PC-3 (cell line): ENCODE measurements at regions of chr11 and their contacts with region 1.

Region 1: GRCh38 chr11:118145285-118146227 is 7.1 kb downstream of the SCN4B start:
- DNase-seq: peak; percentile 95
- ATAC-seq: peak; percentile 96
- H3K4me3 ChIP-seq: peak overlapping the region; percentile 87
- H3K27ac ChIP-seq: no peak overlapping the region
- H3K4me1 ChIP-seq: no peaks in the 10 kb centered on the region
- H3K27me3 ChIP-seq: peaks cover 42% of the 10 kb centered on the region
- CTCF ChIP-seq: peak; percentile 96

Region 2: DNA sequence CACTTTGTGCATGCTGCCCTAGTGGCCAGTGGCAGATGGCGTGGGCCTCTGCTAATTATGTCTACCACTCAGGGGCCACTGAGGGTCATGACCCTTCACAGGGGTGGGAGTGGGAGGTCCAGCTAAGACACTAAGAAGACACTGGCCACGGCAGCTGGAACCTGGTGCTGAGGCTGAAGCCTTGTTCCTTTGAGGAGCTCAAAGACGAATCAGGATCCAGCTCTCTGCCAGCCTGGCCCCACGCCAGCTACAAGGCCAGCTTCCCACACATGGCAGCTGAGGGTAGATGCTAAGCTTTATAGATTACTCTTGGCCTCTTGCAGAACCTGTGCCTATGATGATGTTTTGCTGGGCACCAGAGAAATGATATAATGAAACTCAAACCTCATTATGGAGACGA is 574.9 kb before region 1 on chr11:
- CTCF ChIA-PET with region 1: no interaction called
- POLR2A ChIA-PET with region 1: no interaction called
- intact Hi-C with region 1: no loop called
- DNase-seq: no peak
- ATAC-seq: no peak
- H3K4me3 ChIP-seq: no peak overlapping the region
- H3K27ac ChIP-seq: no peak overlapping the region
- H3K4me1 ChIP-seq: no peaks in the 10 kb centered on the region
- H3K27me3 ChIP-seq: peaks cover 51% of the 10 kb centered on the region
- CTCF ChIP-seq: no peak

Region 3: GRCh38 chr11:118027691-118028090 is 117.9 kb before region 1 on chr11:
- CTCF ChIA-PET with region 1: no interaction called
- POLR2A ChIA-PET with region 1: no interaction called
- intact Hi-C with region 1: no loop called
- DNase-seq: no peak
- ATAC-seq: no peak
- H3K4me3 ChIP-seq: no peak overlapping the region
- H3K27ac ChIP-seq: no peak overlapping the region
- H3K4me1 ChIP-seq: no peaks in the 10 kb centered on the region
- H3K27me3 ChIP-seq: peaks cover 76% of the 10 kb centered on the region
- CTCF ChIP-seq: no peak; the same call in 1 of the 2 replicates

Region 4: DNA sequence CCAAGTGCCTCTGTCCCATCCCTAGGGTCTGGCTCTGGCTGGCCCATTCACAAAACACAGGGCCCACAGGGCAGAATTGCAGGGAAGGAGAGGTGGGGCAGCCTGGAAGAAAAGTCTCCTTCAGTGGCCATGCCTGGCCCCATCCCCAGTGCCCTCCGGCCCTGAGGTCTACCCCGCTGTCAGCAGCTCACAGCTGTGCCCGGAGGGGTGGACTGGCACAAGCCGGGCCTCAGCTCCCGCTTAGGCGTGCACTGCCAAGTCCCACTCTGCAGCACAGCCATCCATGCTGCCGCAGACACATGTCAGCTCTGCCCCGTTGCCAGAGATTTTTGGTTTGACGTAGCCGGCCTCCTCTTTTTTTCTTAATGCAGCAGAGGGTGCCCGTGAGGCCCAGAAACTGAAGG is 34.7 kb after region 1 on chr11:
- CTCF ChIA-PET with region 1: no interaction called
- POLR2A ChIA-PET with region 1: no interaction called
- intact Hi-C with region 1: no loop called
- DNase-seq: no peak
- ATAC-seq: no peak
- H3K4me3 ChIP-seq: no peak overlapping the region
- H3K27ac ChIP-seq: no peak overlapping the region
- H3K4me1 ChIP-seq: peaks cover 10% of the 10 kb centered on the region
- H3K27me3 ChIP-seq: no peaks in the 10 kb centered on the region
- CTCF ChIP-seq: no peak

Region 5: DNA sequence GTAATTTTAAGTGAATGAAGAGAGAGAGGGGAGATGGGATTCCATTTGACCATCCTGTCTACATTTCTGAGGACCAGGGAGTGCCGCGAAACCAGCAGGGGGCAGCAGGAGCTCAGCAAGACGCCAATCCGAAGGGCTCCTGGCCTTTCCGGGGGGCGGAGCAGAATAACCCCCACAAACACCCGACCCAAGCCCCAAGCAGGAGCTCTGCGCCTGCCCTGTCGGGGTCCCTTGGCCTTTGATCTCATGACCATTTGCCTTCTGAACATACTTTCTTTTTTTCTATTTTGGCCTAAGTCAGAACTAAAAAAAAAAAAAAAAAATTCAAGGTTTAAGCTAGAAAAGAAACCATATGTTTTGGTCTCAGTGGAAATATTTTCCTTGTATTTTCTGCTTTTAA is 52.8 kb after region 1 on chr11:
- CTCF ChIA-PET with region 1: interaction called, 5 read pairs
- POLR2A ChIA-PET with region 1: no interaction called
- intact Hi-C with region 1: loop called (anchors 1 kb)
- DNase-seq: peak; percentile 78
- ATAC-seq: peak; percentile 47
- H3K4me3 ChIP-seq: peak overlapping the region; percentile 23; the same call in 1 of the 2 replicates
- H3K27ac ChIP-seq: no peak overlapping the region
- H3K4me1 ChIP-seq: peaks cover 19% of the 10 kb centered on the region
- H3K27me3 ChIP-seq: no peaks in the 10 kb centered on the region
- CTCF ChIP-seq: peak; percentile 99

Region 6: GRCh38 chr11:118353084-118353710 is 207.6 kb after region 1 on chr11:
- CTCF ChIA-PET with region 1: interaction called, 3 read pairs
- POLR2A ChIA-PET with region 1: no interaction called
- intact Hi-C with region 1: loop called (anchors 1 kb)
- DNase-seq: peak; percentile 67
- ATAC-seq: no peak
- H3K4me3 ChIP-seq: no peak overlapping the region
- H3K27ac ChIP-seq: no peak overlapping the region
- H3K4me1 ChIP-seq: no peaks in the 10 kb centered on the region
- H3K27me3 ChIP-seq: peaks cover 24% of the 10 kb centered on the region; the same call in 1 of the 2 replicates
- CTCF ChIP-seq: peak; percentile 86

Region 7: GRCh38 chr11:118572061-118572980 is 426.8 kb after region 1 on chr11 and contains the start of gene ARCN1:
- CTCF ChIA-PET with region 1: no interaction called
- POLR2A ChIA-PET with region 1: no interaction called
- intact Hi-C with region 1: loop called (anchors 2 kb)
- DNase-seq: peak; percentile 51
- ATAC-seq: peak; percentile 68
- H3K4me3 ChIP-seq: peak within 1 kb of the TSS; percentile 88
- H3K27ac ChIP-seq: peak within 1 kb of the TSS; percentile 81
- H3K4me1 ChIP-seq: peaks cover 25% of the 10 kb centered on the region
- H3K27me3 ChIP-seq: no peaks in the 10 kb centered on the region
- CTCF ChIP-seq: no peak
- total RNA-seq, gene ARCN1: 122 and 132 TPM in 2 replicates